B cell (primary cell): ENCODE measurements at regions of chr5 and their contacts with region 1.

Region 1: GRCh38 chr5:73201547-73202513 is 28.8 kb downstream of the TMEM174 start:
- DNase-seq: peak; percentile 50
- ATAC-seq: peak; percentile 56
- H3K4me3 ChIP-seq: no peak overlapping the region
- H3K4me3 Mint-ChIP-seq: peak overlapping the region; percentile 36
- H3K27ac ChIP-seq: no peak overlapping the region
- H3K27ac Mint-ChIP-seq: no peak overlapping the region
- H3K4me1 ChIP-seq: no peaks in the 10 kb centered on the region
- H3K4me1 Mint-ChIP-seq: peaks cover 3% of the 10 kb centered on the region
- H3K27me3 ChIP-seq: peaks cover 0 to 20% (median 4%) of the 10 kb centered on the region in 4 experiments
- H3K27me3 Mint-ChIP-seq: peaks cover 63% of the 10 kb centered on the region
- CTCF ChIP-seq: peak; percentile 75

Region 2: GRCh38 chr5:72611118-72611730 is 590.6 kb before region 1 on chr5:
- CTCF ChIA-PET with region 1: no interaction called
- POLR2A ChIA-PET with region 1: no interaction called
- intact Hi-C with region 1: loop called (anchors 2 kb)
- DNase-seq: peak; percentile 60
- ATAC-seq: peak; percentile 76
- H3K4me3 ChIP-seq: no peak overlapping the region
- H3K4me3 Mint-ChIP-seq: no peak overlapping the region
- H3K27ac ChIP-seq: no peak overlapping the region
- H3K27ac Mint-ChIP-seq: no peak overlapping the region
- H3K4me1 ChIP-seq: no peaks in the 10 kb centered on the region
- H3K4me1 Mint-ChIP-seq: no peaks in the 10 kb centered on the region
- H3K27me3 ChIP-seq: peaks cover 0 to 4% (median 0%) of the 10 kb centered on the region in 4 experiments
- H3K27me3 Mint-ChIP-seq: peaks cover 15% of the 10 kb centered on the region
- CTCF ChIP-seq: peak; percentile 87

Region 3: GRCh38 chr5:72687288-72687687 is 514.5 kb before region 1 on chr5:
- CTCF ChIA-PET with region 1: no interaction called
- POLR2A ChIA-PET with region 1: no interaction called
- intact Hi-C with region 1: no loop called
- DNase-seq: no peak
- ATAC-seq: no peak
- H3K4me3 ChIP-seq: no peak overlapping the region
- H3K4me3 Mint-ChIP-seq: no peak overlapping the region
- H3K27ac ChIP-seq: no peak overlapping the region
- H3K27ac Mint-ChIP-seq: no peak overlapping the region
- H3K4me1 ChIP-seq: no peaks in the 10 kb centered on the region
- H3K4me1 Mint-ChIP-seq: no peaks in the 10 kb centered on the region
- H3K27me3 ChIP-seq: peaks cover 0 to 4% (median 0%) of the 10 kb centered on the region in 4 experiments
- H3K27me3 Mint-ChIP-seq: peaks cover 31% of the 10 kb centered on the region
- CTCF ChIP-seq: no peak

Region 4: DNA sequence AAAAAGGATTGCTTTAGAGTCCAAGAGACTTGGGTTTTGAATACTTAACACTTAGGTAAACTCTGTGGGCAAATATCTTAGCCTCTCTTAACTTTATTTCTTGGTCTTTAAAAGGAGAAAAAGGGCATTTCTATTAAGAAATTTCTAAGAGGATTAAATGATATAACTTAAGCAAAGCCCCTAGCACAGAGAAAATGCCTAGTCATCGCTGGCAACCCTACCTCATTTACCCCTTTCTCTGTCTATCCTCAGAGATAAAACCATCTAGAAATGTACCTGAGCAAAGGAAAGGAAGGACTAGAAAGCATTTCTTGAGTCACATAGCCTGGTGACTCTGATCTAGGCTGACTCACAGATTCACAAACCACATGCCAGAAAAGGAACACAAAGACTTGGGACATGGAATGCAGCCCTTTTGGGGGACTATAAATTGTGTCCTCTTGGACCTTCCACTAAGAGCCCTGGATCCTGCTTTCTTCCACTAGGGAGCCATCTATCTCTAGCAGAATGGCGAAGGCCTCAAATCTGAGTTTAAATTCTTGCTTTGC is 126.2 kb after region 1 on chr5:
- CTCF ChIA-PET with region 1: no interaction called
- POLR2A ChIA-PET with region 1: no interaction called
- intact Hi-C with region 1: no loop called
- DNase-seq: no peak
- ATAC-seq: no peak
- H3K4me3 ChIP-seq: no peak overlapping the region
- H3K4me3 Mint-ChIP-seq: no peak overlapping the region
- H3K27ac ChIP-seq: no peak overlapping the region
- H3K27ac Mint-ChIP-seq: no peak overlapping the region
- H3K4me1 ChIP-seq: no peaks in the 10 kb centered on the region
- H3K4me1 Mint-ChIP-seq: no peaks in the 10 kb centered on the region
- H3K27me3 ChIP-seq: peaks cover 0 to 3% (median 1%) of the 10 kb centered on the region in 4 experiments
- H3K27me3 Mint-ChIP-seq: peaks cover 13% of the 10 kb centered on the region
- CTCF ChIP-seq: no peak